ENCODE measurements at regions of chr2 and their contacts with region 1.

Region 1: GRCh38 chr2:53767405-53768241 is at the start of gene CHAC2:
- DNase-seq: peak; percentile 91
- H3K4me3 ChIP-seq: peak within 1 kb of the TSS; percentile 63 to 85 (median 78)
- H3K27ac ChIP-seq: peak within 1 kb of the TSS; percentile 65
- H3K4me1 ChIP-seq: peaks cover 12% of the 10 kb centered on the region
- H3K27me3 ChIP-seq: no peaks in the 10 kb centered on the region
- CTCF ChIP-seq: peak in 1 of 2 donors; percentile 51
- POLR2A ChIP-seq: peak; percentile 89
- total RNA-seq, gene CHAC2: 8.1 and 8.3 TPM in 2 replicates

Region 2: DNA sequence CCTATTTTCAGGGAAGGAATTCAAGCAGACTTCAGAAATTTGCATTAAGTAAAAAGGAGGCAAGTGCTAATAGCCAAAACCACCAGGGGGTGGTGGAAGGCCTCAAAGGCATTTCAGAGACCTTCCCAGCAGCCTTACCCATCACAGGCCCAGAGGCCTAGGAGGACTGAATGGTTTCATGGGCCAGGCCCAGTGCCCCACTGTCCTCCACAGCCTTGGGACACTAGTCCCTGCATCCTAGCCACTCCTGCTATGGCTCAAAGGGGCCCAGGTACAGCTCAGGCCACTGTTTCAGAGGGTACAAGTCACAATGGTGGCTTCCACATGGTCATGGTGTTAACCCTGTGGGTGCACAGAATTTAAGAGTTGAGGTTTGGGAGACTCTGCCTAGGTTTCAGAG is 58.6 kb before region 1 on chr2:
- CTCF ChIA-PET with region 1: no interaction called
- POLR2A ChIA-PET with region 1: no interaction called
- dilution Hi-C with region 1: no loop called
- intact Hi-C with region 1: no loop called
- DNase-seq: no peak
- H3K4me3 ChIP-seq: no peak overlapping the region
- H3K27ac ChIP-seq: no peak overlapping the region
- H3K4me1 ChIP-seq: no peaks in the 10 kb centered on the region
- H3K27me3 ChIP-seq: no peaks in the 10 kb centered on the region
- CTCF ChIP-seq: no peak
- POLR2A ChIP-seq: no peak

Region 3: GRCh38 chr2:53786705-53787612 is 19.3 kb after region 1 on chr2 and contains the starts of genes ASB3 and ERLEC1:
- CTCF ChIA-PET with region 1: interaction called, 13 read pairs
- POLR2A ChIA-PET with region 1: interaction called, 8 read pairs
- dilution Hi-C with region 1: no loop called
- intact Hi-C with region 1: loop called (anchors 1 kb)
- DNase-seq: peak; percentile 87
- H3K4me3 ChIP-seq: peak within 1 kb of the TSS; percentile 52 to 98 (median 92)
- H3K27ac ChIP-seq: peak within 1 kb of the TSS; percentile 89
- H3K4me1 ChIP-seq: peaks cover 23% of the 10 kb centered on the region
- H3K27me3 ChIP-seq: no peaks in the 10 kb centered on the region
- CTCF ChIP-seq: peak in 1 of 2 donors; percentile 3
- POLR2A ChIP-seq: peak; percentile 66
- total RNA-seq, gene ASB3: 14.2 and 20.5 TPM in 2 replicates
- total RNA-seq, gene ERLEC1: 37.6 TPM in 2 replicates

Region 4: GRCh38 chr2:53880756-53881155 is 113.1 kb after region 1 on chr2:
- CTCF ChIA-PET with region 1: no interaction called
- POLR2A ChIA-PET with region 1: no interaction called
- dilution Hi-C with region 1: no loop called
- intact Hi-C with region 1: no loop called
- DNase-seq: no peak
- H3K4me3 ChIP-seq: no peak overlapping the region
- H3K27ac ChIP-seq: no peak overlapping the region
- H3K4me1 ChIP-seq: peaks cover 11% of the 10 kb centered on the region
- H3K27me3 ChIP-seq: no peaks in the 10 kb centered on the region
- CTCF ChIP-seq: no peak
- POLR2A ChIP-seq: no peak

Region 5: DNA sequence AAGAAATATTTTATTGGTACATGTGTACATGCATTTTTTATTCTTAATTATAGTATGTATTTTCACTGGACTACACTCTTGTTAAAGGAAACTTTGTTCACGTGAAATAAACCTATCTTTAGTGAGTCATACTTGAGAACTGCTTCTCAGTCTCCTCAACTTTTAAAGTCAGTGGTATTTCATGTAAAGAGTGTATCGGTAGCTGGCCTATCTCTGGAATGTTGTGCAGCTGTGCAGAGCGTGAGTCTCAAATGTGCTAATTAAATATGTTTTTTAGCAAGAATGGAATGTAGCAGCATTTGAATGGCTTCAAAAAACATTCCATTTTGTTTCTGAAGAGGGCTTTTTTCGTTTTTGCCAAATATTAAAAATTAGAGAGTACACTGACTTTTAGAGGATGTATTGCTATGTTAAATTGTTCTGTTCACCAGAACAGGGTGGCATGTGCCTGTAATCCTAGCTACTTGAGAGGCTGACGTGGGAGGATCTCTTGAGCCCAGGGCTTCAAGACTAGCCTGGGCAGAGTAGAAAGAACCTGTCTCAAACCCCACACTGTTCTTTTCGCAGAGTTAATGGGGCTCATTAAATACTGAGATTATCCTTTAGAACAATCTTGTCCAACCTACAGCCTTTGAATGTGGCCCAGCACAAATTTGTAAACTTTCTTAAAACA is 702.8 kb after region 1 on chr2:
- CTCF ChIA-PET with region 1: no interaction called
- POLR2A ChIA-PET with region 1: no interaction called
- dilution Hi-C with region 1: no loop called
- intact Hi-C with region 1: no loop called
- DNase-seq: peak; percentile 77
- H3K4me3 ChIP-seq: no peak overlapping the region
- H3K27ac ChIP-seq: peak overlapping the region; percentile 45
- H3K4me1 ChIP-seq: peaks cover 33% of the 10 kb centered on the region
- H3K27me3 ChIP-seq: no peaks in the 10 kb centered on the region
- CTCF ChIP-seq: no peak
- POLR2A ChIP-seq: no peak